Mammary epithelial cell (primary cell): ENCODE measurements at regions of chr5 and their contacts with region 1.

Region 1: GRCh38 chr5:44613936-44614335 is 194.8 kb upstream of the MRPS30 start:
- DNase-seq: no peak
- H3K4me3 ChIP-seq: no peak overlapping the region
- H3K27ac ChIP-seq: no peak overlapping the region
- H3K4me1 ChIP-seq: no peaks in the 10 kb centered on the region
- H3K27me3 ChIP-seq: no peaks in the 10 kb centered on the region
- CTCF ChIP-seq: no peak

Region 2: DNA sequence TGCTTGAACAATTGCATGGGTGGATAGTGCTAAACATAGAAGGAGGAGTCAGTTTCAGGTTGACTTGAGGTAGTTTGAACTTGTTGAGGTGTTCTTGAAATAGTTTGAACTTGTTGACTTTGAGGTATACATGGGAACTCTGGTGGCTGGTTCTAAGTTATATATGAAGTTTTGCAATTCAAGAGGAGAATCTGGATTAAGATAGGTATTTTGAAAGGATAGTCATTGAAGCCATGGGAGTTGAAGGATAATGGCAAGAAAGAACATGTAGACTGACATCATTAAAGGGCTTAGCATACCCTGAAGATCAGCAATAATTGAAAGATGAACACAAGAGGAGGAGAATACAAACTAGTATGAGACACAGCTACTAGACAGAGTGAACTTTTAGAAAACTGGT is 12.9 kb after region 1 on chr5:
- CTCF ChIA-PET with region 1: no interaction called
- dilution Hi-C with region 1: no loop called
- in situ Hi-C with region 1: no loop called
- intact Hi-C with region 1: loop called (anchors 1 kb)
- DNase-seq: peak; percentile 2
- H3K4me3 ChIP-seq: no peak overlapping the region
- H3K27ac ChIP-seq: no peak overlapping the region
- H3K4me1 ChIP-seq: no peaks in the 10 kb centered on the region
- H3K27me3 ChIP-seq: no peaks in the 10 kb centered on the region
- CTCF ChIP-seq: no peak